Activated CD4-positive, alpha-beta T cell treated with anti-CD3 and anti-CD28 coated beads for 36 hours (primary cell): ENCODE measurements at regions of chr22 and their contacts with region 1.

Region 1: GRCh38 chr22:30591588-30592359 is at the start of gene PES1:
- DNase-seq: peak; percentile 96
- ATAC-seq: peak; percentile 100
- H3K4me3 Mint-ChIP-seq: no peak within 1 kb of the TSS
- H3K27ac Mint-ChIP-seq: no peak within 1 kb of the TSS
- H3K4me1 Mint-ChIP-seq: no peaks in the 10 kb centered on the region
- H3K27me3 Mint-ChIP-seq: peaks cover 4% of the 10 kb centered on the region
- total RNA-seq, gene PES1: 134 to 137 TPM

Region 2: DNA sequence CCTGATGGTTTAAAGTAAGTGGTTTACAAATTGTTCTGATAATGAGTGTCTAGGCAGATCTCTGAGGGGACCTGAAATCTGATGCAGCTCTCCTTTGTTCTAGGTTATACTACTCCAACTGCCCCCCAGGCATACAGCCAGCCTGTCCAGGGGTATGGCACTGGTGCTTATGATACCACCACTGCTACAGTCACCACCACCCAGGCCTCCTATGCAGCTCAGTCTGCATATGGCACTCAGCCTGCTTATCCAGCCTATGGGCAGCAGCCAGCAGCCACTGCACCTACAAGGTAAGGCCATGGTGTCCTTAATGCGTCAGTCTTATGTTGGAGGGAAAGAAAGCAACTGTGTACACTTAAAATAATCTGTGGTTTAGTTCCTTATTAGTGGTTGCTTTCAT is 1313.8 kb before region 1 on chr22:
- CTCF ChIA-PET with region 1: no interaction called
- POLR2A ChIA-PET with region 1: no interaction called
- intact Hi-C with region 1: no loop called
- DNase-seq: no peak
- ATAC-seq: no peak
- H3K4me3 Mint-ChIP-seq: no peak overlapping the region
- H3K27ac Mint-ChIP-seq: no peak overlapping the region
- H3K4me1 Mint-ChIP-seq: peaks cover 47% of the 10 kb centered on the region
- H3K27me3 Mint-ChIP-seq: no peaks in the 10 kb centered on the region

Region 3: DNA sequence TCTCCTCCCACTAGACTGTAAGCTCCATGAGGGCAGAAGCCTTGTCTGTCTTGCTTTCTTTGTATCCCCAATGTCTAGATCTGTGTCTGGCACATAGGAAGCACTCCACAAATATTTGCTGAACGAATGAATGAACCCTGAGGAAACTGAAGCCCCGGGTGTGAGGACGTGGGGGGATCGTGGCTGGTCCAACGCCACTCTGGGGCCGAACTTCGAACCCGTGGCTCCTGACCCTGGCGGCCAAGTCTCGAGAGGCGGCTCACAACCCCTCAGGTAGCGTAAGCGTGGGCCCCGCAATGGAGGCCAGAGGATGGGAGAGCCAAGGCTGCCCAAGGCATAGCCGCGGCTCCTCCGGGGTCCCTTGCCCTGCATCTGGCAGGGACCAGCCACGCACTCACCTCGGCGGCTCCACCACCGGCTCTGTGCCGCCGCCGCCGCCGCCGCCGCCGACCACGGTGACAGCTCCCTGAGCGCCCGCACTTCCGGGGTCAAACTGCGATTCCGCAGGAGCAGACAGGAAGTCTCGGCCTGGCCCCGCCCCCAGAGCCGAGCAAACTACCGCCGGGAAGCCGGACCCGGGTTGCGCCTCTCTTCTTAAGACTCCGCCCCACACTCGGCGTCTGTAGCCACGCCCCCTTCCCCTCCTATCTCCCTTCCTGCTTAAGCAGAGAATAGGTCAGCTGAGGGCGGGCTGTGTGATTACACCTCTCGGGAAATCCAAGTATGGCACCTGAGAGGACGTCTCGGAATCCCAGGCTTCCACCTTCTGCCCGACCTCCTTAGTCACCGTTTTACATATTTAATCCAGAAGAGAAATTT is 753.8 kb before region 1 on chr22 and contains the start of gene ASCC2:
- CTCF ChIA-PET with region 1: no interaction called
- POLR2A ChIA-PET with region 1: no interaction called
- intact Hi-C with region 1: loop called in 1 of 2 experiments (anchors 1 kb)
- DNase-seq: peak; percentile 100
- ATAC-seq: peak; percentile 99
- H3K4me3 Mint-ChIP-seq: peak within 1 kb of the TSS; percentile 99
- H3K27ac Mint-ChIP-seq: peak within 1 kb of the TSS; percentile 97
- H3K4me1 Mint-ChIP-seq: peaks cover 36% of the 10 kb centered on the region
- H3K27me3 Mint-ChIP-seq: no peaks in the 10 kb centered on the region
- total RNA-seq, gene ASCC2: 56.0 to 69.9 TPM

Region 4: GRCh38 chr22:30305519-30305905 is 286.3 kb before region 1 on chr22:
- CTCF ChIA-PET with region 1: no interaction called
- POLR2A ChIA-PET with region 1: no interaction called
- intact Hi-C with region 1: loop called in 1 of 2 experiments (anchors 5 kb)
- DNase-seq: peak; percentile 68
- ATAC-seq: peak; percentile 79
- H3K4me3 Mint-ChIP-seq: peak overlapping the region; percentile 59
- H3K27ac Mint-ChIP-seq: peak overlapping the region; percentile 85
- H3K4me1 Mint-ChIP-seq: peaks cover 97% of the 10 kb centered on the region
- H3K27me3 Mint-ChIP-seq: no peaks in the 10 kb centered on the region

Region 5: GRCh38 chr22:30634471-30635233 is 42.9 kb after region 1 on chr22:
- CTCF ChIA-PET with region 1: interaction called, 5 read pairs
- POLR2A ChIA-PET with region 1: no interaction called
- intact Hi-C with region 1: loop called in 1 of 2 experiments (anchors 1 kb)
- DNase-seq: peak; percentile 95
- ATAC-seq: peak; percentile 77
- H3K4me3 Mint-ChIP-seq: peak overlapping the region; percentile 75
- H3K27ac Mint-ChIP-seq: peak overlapping the region; percentile 84
- H3K4me1 Mint-ChIP-seq: peaks cover 22% of the 10 kb centered on the region
- H3K27me3 Mint-ChIP-seq: no peaks in the 10 kb centered on the region

Region 6: GRCh38 chr22:30790366-30790765 is 198.6 kb after region 1 on chr22:
- CTCF ChIA-PET with region 1: no interaction called
- POLR2A ChIA-PET with region 1: no interaction called
- intact Hi-C with region 1: no loop called
- DNase-seq: no peak
- ATAC-seq: no peak
- H3K4me3 Mint-ChIP-seq: no peak overlapping the region
- H3K27ac Mint-ChIP-seq: no peak overlapping the region
- H3K4me1 Mint-ChIP-seq: no peaks in the 10 kb centered on the region
- H3K27me3 Mint-ChIP-seq: no peaks in the 10 kb centered on the region

Region 7: GRCh38 chr22:30968924-30969539 is 377.3 kb after region 1 on chr22 and contains the start of gene TUG1:
- CTCF ChIA-PET with region 1: no interaction called
- POLR2A ChIA-PET with region 1: no interaction called
- intact Hi-C with region 1: loop called in 1 of 2 experiments (anchors 1 kb)
- DNase-seq: peak; percentile 99
- ATAC-seq: peak; percentile 93
- H3K4me3 Mint-ChIP-seq: peak within 1 kb of the TSS; percentile 90
- H3K27ac Mint-ChIP-seq: peak within 1 kb of the TSS; percentile 95
- H3K4me1 Mint-ChIP-seq: peaks cover 51% of the 10 kb centered on the region
- H3K27me3 Mint-ChIP-seq: no peaks in the 10 kb centered on the region
- total RNA-seq, gene TUG1: 46.8 to 56.4 TPM

Region 8: DNA sequence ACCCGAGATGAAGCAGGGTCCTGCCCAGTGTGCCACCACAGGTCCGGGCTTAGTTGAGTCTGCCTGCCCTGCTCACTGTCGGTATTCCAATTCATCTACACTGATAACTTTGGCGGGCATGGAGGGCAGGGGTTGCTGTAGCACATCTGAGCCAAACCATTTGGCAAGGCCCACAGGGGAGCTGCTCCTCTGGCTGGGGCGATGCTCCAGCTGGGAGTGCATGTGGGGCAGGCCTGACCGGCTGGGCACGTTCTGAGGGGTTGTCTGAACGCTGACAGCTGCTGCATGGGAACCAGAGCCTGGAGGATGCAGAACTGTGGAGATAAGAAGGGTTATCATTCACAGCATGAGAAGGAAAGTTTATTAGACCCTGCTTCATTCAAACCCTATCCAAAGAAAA is 848.0 kb after region 1 on chr22:
- CTCF ChIA-PET with region 1: no interaction called
- POLR2A ChIA-PET with region 1: no interaction called
- intact Hi-C with region 1: no loop called
- DNase-seq: no peak
- ATAC-seq: no peak
- H3K4me3 Mint-ChIP-seq: no peak overlapping the region
- H3K27ac Mint-ChIP-seq: no peak overlapping the region
- H3K4me1 Mint-ChIP-seq: no peaks in the 10 kb centered on the region
- H3K27me3 Mint-ChIP-seq: no peaks in the 10 kb centered on the region